ENCODE measurements at regions of chr2 and their contacts with region 1.

Region 1: DNA sequence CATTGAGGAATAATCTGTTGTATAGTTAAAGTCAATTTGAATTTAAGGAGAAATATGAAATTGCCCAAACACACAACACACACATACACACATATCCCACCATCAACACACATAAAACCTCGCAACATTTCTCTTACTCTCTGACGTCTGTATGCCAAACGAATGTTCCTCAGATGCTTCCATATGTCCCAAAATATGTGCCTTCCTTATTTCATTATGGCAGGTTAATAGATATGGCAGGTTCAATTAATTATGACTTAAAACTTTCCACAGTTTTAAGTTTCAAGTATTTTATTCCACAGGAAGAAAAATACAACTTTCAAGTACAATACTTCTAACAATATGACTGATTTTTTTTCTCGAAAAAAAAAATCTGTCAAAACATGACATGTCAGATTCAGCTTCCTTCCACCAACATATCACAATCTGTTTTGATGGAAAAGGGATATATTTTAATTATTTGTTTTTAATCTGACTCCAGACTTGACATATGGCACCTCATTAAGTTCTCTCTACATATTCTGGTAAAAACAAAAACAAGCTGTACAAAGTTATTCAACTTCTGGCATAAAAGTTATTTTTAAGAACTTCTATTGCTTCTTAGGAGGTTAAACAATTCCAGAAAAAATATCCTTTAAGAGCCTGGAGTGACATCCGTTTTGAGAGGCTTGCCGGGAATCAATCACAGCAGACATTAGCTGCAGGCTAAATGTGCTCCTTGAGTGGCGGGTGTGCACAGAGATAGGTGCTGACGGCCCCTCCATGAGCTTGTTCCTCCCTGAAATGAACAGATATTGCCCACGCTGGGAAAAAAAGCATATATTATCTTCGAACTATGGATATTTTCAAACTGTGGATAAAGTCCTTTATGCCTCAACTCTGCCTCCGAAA is 812.7 kb downstream of the DCDC2C start:
- DNase-seq: no peak
- H3K4me3 ChIP-seq: no peak overlapping the region
- H3K27ac ChIP-seq: no peak overlapping the region
- H3K4me1 ChIP-seq: no peaks in the 10 kb centered on the region
- H3K27me3 ChIP-seq: no peaks in the 10 kb centered on the region
- CTCF ChIP-seq: no peak

Region 2: GRCh38 chr2:4475618-4476017 is 40.5 kb before region 1 on chr2:
- CTCF ChIA-PET with region 1: no interaction called
- dilution Hi-C with region 1: loop called (anchors 5 kb)
- in situ Hi-C with region 1: no loop called
- intact Hi-C with region 1: no loop called
- DNase-seq: no peak
- H3K4me3 ChIP-seq: no peak overlapping the region
- H3K27ac ChIP-seq: no peak overlapping the region
- H3K4me1 ChIP-seq: no peaks in the 10 kb centered on the region
- H3K27me3 ChIP-seq: no peaks in the 10 kb centered on the region
- CTCF ChIP-seq: no peak